ENCODE measurements at regions of chr3 and their contacts with region 1.

Region 1: GRCh38 chr3:39288300-39288808 is 8.5 kb upstream of the CX3CR1 start:
- DNase-seq: no peak
- H3K4me3 ChIP-seq: no peak overlapping the region
- H3K27ac ChIP-seq: no peak overlapping the region
- H3K4me1 ChIP-seq: no peaks in the 10 kb centered on the region
- H3K27me3 ChIP-seq: no peaks in the 10 kb centered on the region
- CTCF ChIP-seq: peak; percentile 72 to 91 (median 85)
- POLR2A ChIP-seq: no peak

Region 2: DNA sequence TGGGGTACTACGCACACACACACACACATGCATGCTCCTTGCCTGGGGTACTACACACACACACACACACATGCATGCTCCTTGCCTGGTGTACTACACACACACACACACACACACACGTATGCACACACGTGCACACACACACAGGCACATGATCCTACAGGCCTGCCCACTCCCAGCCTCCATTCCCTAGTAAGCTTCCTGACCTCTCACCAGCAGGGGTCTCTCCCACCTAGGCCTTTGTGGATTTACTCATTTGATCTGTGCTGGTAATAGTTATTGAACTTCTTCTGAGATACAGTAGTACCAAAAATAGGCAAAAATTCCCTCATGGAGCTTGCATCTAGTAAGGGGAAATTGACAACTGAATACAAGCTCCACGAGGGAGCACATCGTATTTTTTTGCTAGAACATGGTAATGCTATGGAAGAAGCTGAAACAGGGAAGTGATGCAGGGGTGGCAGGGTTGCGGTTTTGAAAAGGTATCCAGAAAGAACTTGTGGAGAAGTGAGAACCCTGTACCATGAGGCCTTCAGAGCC is 161.8 kb before region 1 on chr3:
- intact Hi-C with region 1: loop called (anchors 5 kb)
- DNase-seq: no peak
- H3K4me3 ChIP-seq: no peak overlapping the region
- H3K27ac ChIP-seq: peak overlapping the region; percentile 15
- H3K4me1 ChIP-seq: peaks cover 19% of the 10 kb centered on the region
- H3K27me3 ChIP-seq: no peaks in the 10 kb centered on the region
- CTCF ChIP-seq: peak; percentile 12 to 60 (median 53)
- POLR2A ChIP-seq: no peak

Region 3: DNA sequence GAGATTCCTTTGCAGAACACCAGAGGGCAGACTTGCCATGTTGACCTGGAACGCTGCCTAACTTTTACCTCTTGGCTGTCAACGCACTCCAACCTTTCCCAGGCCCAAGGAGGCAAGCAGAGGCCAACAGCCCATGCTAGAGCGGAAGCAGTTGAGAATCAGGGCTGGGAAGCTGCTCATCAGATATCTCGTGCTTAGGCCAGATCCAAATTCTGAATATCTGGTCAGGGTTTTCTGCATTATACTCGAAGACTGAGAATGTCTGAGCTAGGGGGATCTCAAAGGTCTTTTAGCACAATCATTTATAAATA is 98.4 kb before region 1 on chr3:
- intact Hi-C with region 1: loop called (anchors 5 kb)
- DNase-seq: no peak
- H3K4me3 ChIP-seq: no peak overlapping the region
- H3K27ac ChIP-seq: no peak overlapping the region
- H3K4me1 ChIP-seq: no peaks in the 10 kb centered on the region
- H3K27me3 ChIP-seq: no peaks in the 10 kb centered on the region
- CTCF ChIP-seq: peak in 2 of 3 experiments; percentile 39 to 60
- POLR2A ChIP-seq: no peak